Keratinocyte (primary cell): ENCODE measurements at regions of chr12 and their contacts with region 1.

Region 1: DNA sequence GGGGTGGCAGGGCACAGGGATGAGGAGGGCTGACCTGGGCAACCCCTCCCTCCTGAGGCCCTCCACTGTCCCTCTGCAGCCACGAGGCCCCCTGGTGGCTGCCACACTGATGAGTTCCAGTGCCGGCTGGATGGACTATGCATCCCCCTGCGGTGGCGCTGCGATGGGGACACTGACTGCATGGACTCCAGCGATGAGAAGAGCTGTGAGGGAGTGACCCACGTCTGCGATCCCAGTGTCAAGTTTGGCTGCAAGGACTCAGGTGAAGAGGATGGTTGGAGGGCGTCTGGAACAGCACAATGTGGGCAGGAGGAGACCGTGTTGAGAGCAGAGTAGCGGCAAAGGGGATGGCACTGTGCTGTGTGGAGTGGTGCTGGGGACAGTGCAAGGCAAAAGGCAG is 25.7 kb upstream of the LRP1-AS start:
- DNase-seq: no peak
- H3K4me3 ChIP-seq: no peak overlapping the region
- H3K27ac ChIP-seq: no peak overlapping the region
- H3K4me1 ChIP-seq: peaks cover 48% of the 10 kb centered on the region
- H3K27me3 ChIP-seq: no peaks in the 10 kb centered on the region
- CTCF ChIP-seq: peak in 2 of 3 experiments; percentile 43 to 55

Region 2: GRCh38 chr12:57129889-57130288 is 43.2 kb before region 1 on chr12:
- dilution Hi-C with region 1: loop called (anchors 5 kb)
- DNase-seq: no peak
- H3K4me3 ChIP-seq: peak overlapping the region; percentile 11 to 90 (median 69)
- H3K27ac ChIP-seq: no peak overlapping the region
- H3K4me1 ChIP-seq: peaks cover 16% of the 10 kb centered on the region
- H3K27me3 ChIP-seq: no peaks in the 10 kb centered on the region
- CTCF ChIP-seq: no peak

Region 3: GRCh38 chr12:57139796-57140649 is 33.1 kb before region 1 on chr12:
- dilution Hi-C with region 1: no loop called
- DNase-seq: no peak
- H3K4me3 ChIP-seq: no peak overlapping the region
- H3K27ac ChIP-seq: no peak overlapping the region
- H3K4me1 ChIP-seq: no peaks in the 10 kb centered on the region
- H3K27me3 ChIP-seq: no peaks in the 10 kb centered on the region
- CTCF ChIP-seq: no peak

Region 4: GRCh38 chr12:57224973-57225679 is 52.0 kb after region 1 on chr12:
- dilution Hi-C with region 1: no loop called
- DNase-seq: no peak
- H3K4me3 ChIP-seq: no peak overlapping the region
- H3K27ac ChIP-seq: no peak overlapping the region
- H3K4me1 ChIP-seq: peaks cover 6% of the 10 kb centered on the region
- H3K27me3 ChIP-seq: peaks cover 17% of the 10 kb centered on the region
- CTCF ChIP-seq: peak in 1 of 3 experiments; percentile 27